SK-N-SH (cell line): ENCODE measurements at regions of chr2 and their contacts with region 1.

Region 1: GRCh38 chr2:7427293-7428060 is 510.3 kb downstream of the RNF144A start:
- DNase-seq: peak; percentile 80
- H3K4me3 ChIP-seq: no peak overlapping the region
- H3K27ac ChIP-seq: no peak overlapping the region
- H3K4me1 ChIP-seq: peaks cover 0 to 4% of the 10 kb centered on the region in 2 experiments; a peak in 2 of 4 replicates
- H3K27me3 ChIP-seq: no peaks in the 10 kb centered on the region
- CTCF ChIP-seq: peak; percentile 90
- EP300 ChIP-seq: peak in 1 of 2 experiments; percentile 11; a peak in 1 of 4 replicates
- RAD21 ChIP-seq: peak; percentile 96

Region 2: GRCh38 chr2:6960659-6961058 is 466.8 kb before region 1 on chr2:
- CTCF ChIA-PET with region 1: no interaction called
- POLR2A ChIA-PET with region 1: no interaction called
- DNase-seq: no peak
- H3K4me3 ChIP-seq: no peak overlapping the region
- H3K27ac ChIP-seq: no peak overlapping the region
- H3K4me1 ChIP-seq: peaks cover 0 to 30% of the 10 kb centered on the region in 2 experiments; a peak in 2 of 4 replicates
- H3K27me3 ChIP-seq: no peaks in the 10 kb centered on the region
- CTCF ChIP-seq: no peak
- EP300 ChIP-seq: no peak
- RAD21 ChIP-seq: no peak

Region 3: DNA sequence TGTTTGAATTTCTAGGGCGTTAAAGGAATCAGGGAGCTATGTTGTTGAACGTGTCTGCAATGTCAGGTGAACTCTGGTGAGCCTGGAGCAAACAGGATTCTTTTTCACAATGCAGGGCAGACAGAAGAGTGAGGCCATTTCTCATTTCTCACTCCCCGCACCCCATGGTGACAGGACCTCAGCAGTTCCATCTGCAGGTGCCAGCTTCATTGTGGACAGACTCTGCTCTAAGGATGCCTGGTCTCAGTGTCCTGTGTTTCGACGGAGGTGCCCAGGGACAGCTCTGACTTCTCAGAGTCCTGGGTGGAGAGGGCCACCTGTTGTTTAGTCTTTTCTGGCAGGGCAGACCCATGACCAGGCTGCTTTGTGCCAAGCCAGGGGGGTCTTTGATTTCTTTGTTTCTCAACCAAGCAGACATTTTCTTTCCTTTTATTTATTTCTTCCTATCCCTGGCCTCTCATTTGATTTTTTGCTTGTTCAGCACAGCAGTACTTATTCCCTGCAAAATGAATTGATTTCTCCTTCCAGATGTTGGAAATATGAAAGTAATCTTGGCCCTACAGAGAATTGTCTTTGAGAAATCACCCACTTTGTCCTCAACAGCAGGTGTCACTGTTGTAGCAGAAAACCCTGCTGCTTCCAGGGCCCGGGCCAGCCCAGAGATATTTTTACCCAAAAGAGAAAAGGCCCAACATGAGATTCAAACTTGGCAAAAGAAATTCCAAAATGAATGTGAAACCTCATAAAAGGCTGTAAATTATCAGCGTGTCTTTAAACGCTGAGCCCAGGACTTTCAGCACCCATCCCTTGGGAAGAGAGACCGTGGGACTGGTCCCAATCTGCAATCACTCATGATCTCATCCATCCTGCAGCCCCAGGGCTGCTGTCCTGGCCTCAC is 308.6 kb before region 1 on chr2:
- CTCF ChIA-PET with region 1: interaction called, 10 read pairs
- POLR2A ChIA-PET with region 1: no interaction called
- DNase-seq: peak; percentile 73
- H3K4me3 ChIP-seq: no peak overlapping the region
- H3K27ac ChIP-seq: no peak overlapping the region
- H3K4me1 ChIP-seq: peaks cover 0 to 5% of the 10 kb centered on the region in 2 experiments; a peak in 2 of 4 replicates
- H3K27me3 ChIP-seq: no peaks in the 10 kb centered on the region
- CTCF ChIP-seq: peak; percentile 84
- EP300 ChIP-seq: no peak
- RAD21 ChIP-seq: peak; percentile 89

Region 4: GRCh38 chr2:7270011-7270431 is 157.5 kb before region 1 on chr2:
- CTCF ChIA-PET with region 1: no interaction called
- POLR2A ChIA-PET with region 1: no interaction called
- DNase-seq: no peak
- H3K4me3 ChIP-seq: no peak overlapping the region
- H3K27ac ChIP-seq: no peak overlapping the region
- H3K4me1 ChIP-seq: peaks cover 0 to 5% of the 10 kb centered on the region in 2 experiments; a peak in 1 of 4 replicates
- H3K27me3 ChIP-seq: no peaks in the 10 kb centered on the region
- CTCF ChIP-seq: no peak
- EP300 ChIP-seq: no peak
- RAD21 ChIP-seq: no peak

Region 5: GRCh38 chr2:7405861-7406715 is 21.4 kb before region 1 on chr2:
- CTCF ChIA-PET with region 1: interaction called, 33 read pairs
- POLR2A ChIA-PET with region 1: no interaction called
- DNase-seq: no peak
- H3K4me3 ChIP-seq: no peak overlapping the region
- H3K27ac ChIP-seq: no peak overlapping the region
- H3K4me1 ChIP-seq: peaks cover 0 to 14% of the 10 kb centered on the region in 2 experiments; a peak in 2 of 4 replicates
- H3K27me3 ChIP-seq: no peaks in the 10 kb centered on the region; the same call in 1 of the 2 replicates
- CTCF ChIP-seq: no peak
- EP300 ChIP-seq: no peak
- RAD21 ChIP-seq: no peak

Region 6: GRCh38 chr2:7450188-7450832 is 22.8 kb after region 1 on chr2:
- CTCF ChIA-PET with region 1: interaction called, 41 read pairs
- POLR2A ChIA-PET with region 1: no interaction called
- DNase-seq: no peak
- H3K4me3 ChIP-seq: no peak overlapping the region
- H3K27ac ChIP-seq: no peak overlapping the region
- H3K4me1 ChIP-seq: peaks cover 0 to 4% of the 10 kb centered on the region in 2 experiments; a peak in 1 of 4 replicates
- H3K27me3 ChIP-seq: no peaks in the 10 kb centered on the region
- CTCF ChIP-seq: no peak
- EP300 ChIP-seq: no peak
- RAD21 ChIP-seq: no peak

Region 7: DNA sequence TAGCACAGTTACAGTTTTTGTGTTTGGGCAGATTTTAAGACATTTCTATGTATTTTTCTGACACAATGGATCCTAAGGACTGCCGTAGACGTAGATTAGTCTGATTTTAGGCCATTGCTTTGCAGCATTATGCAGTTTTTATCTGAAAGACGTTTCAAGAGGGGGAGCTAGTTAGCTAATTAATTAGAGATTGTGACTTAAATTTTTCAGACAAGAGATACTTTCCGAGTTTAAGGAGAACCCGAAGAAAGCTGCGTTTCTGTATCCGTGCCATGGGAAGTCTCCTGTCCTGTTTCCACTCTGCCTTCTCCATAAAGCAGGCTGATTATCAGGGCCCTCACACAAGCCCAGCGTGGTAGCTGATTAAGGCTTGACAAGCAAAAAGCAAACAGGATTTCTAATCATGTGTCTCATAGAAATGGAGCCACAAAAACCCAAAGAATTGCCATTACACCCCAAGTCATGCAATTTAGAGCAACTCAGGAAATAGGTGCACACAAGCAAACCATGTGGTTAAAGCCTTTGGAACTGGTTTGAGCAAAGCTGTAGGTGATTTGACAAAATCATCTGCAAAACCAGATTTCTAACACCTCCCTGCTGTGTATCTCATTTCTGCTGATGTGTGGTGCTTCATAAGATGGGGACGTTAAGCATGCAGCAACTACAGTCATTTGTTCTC is 297.8 kb after region 1 on chr2:
- CTCF ChIA-PET with region 1: interaction called, 10 read pairs
- POLR2A ChIA-PET with region 1: no interaction called
- DNase-seq: no peak
- H3K4me3 ChIP-seq: no peak overlapping the region
- H3K27ac ChIP-seq: no peak overlapping the region
- H3K4me1 ChIP-seq: no peaks in the 10 kb centered on the region; a peak in 1 of 4 replicates
- H3K27me3 ChIP-seq: no peaks in the 10 kb centered on the region
- CTCF ChIP-seq: no peak
- EP300 ChIP-seq: no peak
- RAD21 ChIP-seq: peak; percentile 42

Region 8: GRCh38 chr2:8539743-8540551 is 1112.5 kb after region 1 on chr2:
- CTCF ChIA-PET with region 1: interaction called, 11 read pairs
- POLR2A ChIA-PET with region 1: no interaction called
- DNase-seq: peak; percentile 93
- H3K4me3 ChIP-seq: no peak overlapping the region
- H3K27ac ChIP-seq: peak overlapping the region in 1 of 2 experiments; percentile 79; a peak in 2 of 4 replicates
- H3K4me1 ChIP-seq: peaks cover 16 to 95% of the 10 kb centered on the region in 2 experiments
- H3K27me3 ChIP-seq: no peaks in the 10 kb centered on the region
- CTCF ChIP-seq: no peak
- EP300 ChIP-seq: peak in 1 of 2 experiments; percentile 95; a peak in 2 of 4 replicates
- RAD21 ChIP-seq: peak; percentile 54; the same call in 1 of the 2 replicates